Right cardiac atrium (tissue), 5 donors: ENCODE measurements at regions of chr3 and their contacts with region 1.

Region 1: DNA sequence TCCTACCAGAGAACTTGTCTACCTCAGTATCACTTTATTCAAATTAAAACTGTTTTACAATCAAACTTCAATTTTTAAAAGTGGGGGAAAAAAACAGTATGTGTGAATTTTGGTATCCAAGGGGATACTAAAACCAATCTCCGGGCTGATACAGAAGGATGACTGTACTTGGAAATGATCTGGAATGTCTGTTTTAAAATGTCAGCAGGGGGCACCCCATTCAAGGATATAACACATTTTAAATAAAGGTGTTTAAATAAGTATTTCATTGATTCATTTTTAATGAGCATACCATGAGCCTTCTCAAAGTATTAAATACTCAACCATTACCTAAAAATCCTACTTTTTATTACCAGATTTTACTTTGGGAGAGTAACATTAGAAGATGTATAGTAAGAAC is 67.9 kb downstream of the ULK4 start:
- DNase-seq: no peak
- ATAC-seq: no peak
- H3K4me3 ChIP-seq: no peak overlapping the region
- H3K27ac ChIP-seq: no peak overlapping the region
- H3K4me1 ChIP-seq: peaks cover 3% of the 10 kb centered on the region
- H3K27me3 ChIP-seq: no peaks in the 10 kb centered on the region

Region 2: GRCh38 chr3:42101048-42101447 is 207.1 kb after region 1 on chr3:
- intact Hi-C with region 1: loop called (anchors 2 to 5 kb)
- DNase-seq: peak; percentile 71 to 84 (median 77)
- ATAC-seq: peak; percentile 82 to 85
- H3K4me3 ChIP-seq: no peak overlapping the region
- H3K27ac ChIP-seq: peak overlapping the region; percentile 87
- H3K4me1 ChIP-seq: peaks cover 30% of the 10 kb centered on the region
- H3K27me3 ChIP-seq: no peaks in the 10 kb centered on the region

Region 3: GRCh38 chr3:42190701-42191462 is 296.9 kb after region 1 on chr3:
- intact Hi-C with region 1: loop called in 3 of 4 experiments (anchors 5 to 10 kb)
- DNase-seq: peak in 1 of 3 donors; percentile 64
- ATAC-seq: peak; percentile 45 to 48
- H3K4me3 ChIP-seq: no peak overlapping the region
- H3K27ac ChIP-seq: no peak overlapping the region
- H3K4me1 ChIP-seq: peaks cover 5% of the 10 kb centered on the region
- H3K27me3 ChIP-seq: no peaks in the 10 kb centered on the region

Region 4: DNA sequence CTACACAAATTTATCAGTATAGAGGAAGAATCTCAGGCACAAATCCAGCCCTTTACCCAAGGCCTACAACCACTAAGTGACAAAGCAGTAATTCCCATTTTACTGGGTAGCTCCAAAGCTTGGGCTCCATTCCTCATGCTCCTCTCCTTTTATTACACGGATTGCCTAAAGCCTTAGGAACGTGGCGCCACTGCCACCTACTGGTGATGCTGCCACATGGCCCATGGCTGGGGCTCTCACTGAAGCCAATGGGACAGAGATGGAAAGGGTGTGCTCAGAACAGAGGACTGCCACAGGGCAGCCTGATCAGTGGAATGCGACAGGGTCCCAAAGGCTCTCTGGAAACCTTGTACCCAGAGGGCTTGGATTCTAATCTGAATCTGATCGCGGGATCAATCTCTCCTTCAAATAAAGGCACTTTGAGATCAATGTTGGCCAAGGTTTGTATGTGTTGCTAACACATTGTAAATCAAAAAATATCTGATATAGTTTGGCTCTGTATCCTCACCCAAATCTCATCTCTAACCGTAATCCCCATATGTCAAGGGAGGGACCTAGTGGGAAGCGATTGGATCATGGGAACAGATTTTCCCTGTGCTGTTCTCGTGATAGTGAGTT is 550.0 kb after region 1 on chr3:
- intact Hi-C with region 1: loop called in 2 of 4 experiments (anchors 5 kb)
- DNase-seq: peak; percentile 77 to 93 (median 92)
- ATAC-seq: peak; percentile 93 to 96
- H3K4me3 ChIP-seq: no peak overlapping the region
- H3K27ac ChIP-seq: no peak overlapping the region
- H3K4me1 ChIP-seq: no peaks in the 10 kb centered on the region
- H3K27me3 ChIP-seq: no peaks in the 10 kb centered on the region

Region 5: GRCh38 chr3:42547401-42547945 is 653.5 kb after region 1 on chr3:
- intact Hi-C with region 1: loop called in 1 of 4 experiments (anchors 10 kb)
- DNase-seq: peak; percentile 67 to 89 (median 86)
- ATAC-seq: peak; percentile 50 to 63
- H3K4me3 ChIP-seq: no peak overlapping the region
- H3K27ac ChIP-seq: no peak overlapping the region
- H3K4me1 ChIP-seq: peaks cover 5% of the 10 kb centered on the region
- H3K27me3 ChIP-seq: no peaks in the 10 kb centered on the region